Naive thymus-derived CD4-positive, alpha-beta T cell (primary cell): ENCODE measurements at regions of chr5 and their contacts with region 1.

Region 1: DNA sequence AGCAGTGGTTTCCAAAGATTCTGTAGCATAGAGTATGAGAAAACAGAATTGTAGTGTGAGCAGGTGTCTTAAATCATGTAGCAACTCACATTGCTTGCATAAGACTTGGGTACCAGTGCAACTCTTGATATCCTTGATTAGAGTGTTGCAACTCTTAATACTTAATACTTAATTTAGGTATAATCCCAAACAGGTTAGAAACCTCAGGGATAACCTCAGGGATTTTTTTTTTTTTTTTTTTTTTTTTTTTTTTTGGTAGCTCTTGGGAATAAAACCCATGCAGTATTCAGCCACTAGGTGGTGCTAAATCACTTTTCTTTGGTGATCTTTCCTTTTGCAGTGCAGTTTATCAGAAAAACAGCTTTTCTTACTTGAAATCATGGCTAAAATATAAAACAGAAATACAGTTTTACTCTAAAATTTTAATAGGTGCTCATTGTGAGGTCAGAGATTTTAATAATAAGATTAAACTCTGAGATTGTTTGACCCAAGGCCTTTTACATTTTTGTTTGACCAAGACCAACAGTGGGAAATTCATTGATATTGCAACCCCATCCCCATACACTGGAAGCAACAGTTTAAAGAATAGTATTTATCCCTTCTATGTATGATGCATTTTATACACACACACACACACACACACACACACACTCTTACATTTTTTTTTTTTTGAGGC is 55.3 kb downstream of the ERAP1 start:
- DNase-seq: peak in 7 of 9 donors; percentile 46 to 72 (median 60)
- ATAC-seq: peak; percentile 70
- H3K4me3 ChIP-seq: no peak overlapping the region
- H3K4me3 Mint-ChIP-seq: no peak overlapping the region
- H3K27ac ChIP-seq: no peak overlapping the region
- H3K27ac Mint-ChIP-seq: peak overlapping the region in 6 of 9 donors; percentile 36 to 67 (median 56)
- H3K4me1 ChIP-seq: no peaks in the 10 kb centered on the region
- H3K4me1 Mint-ChIP-seq: peaks cover 0 to 8% (median 0%) of the 10 kb centered on the region in 7 donors
- H3K27me3 ChIP-seq: no peaks in the 10 kb centered on the region
- H3K27me3 Mint-ChIP-seq: no peaks in the 10 kb centered on the region

Region 2: GRCh38 chr5:96247097-96247701 is 505.3 kb before region 1 on chr5:
- CTCF ChIA-PET with region 1: no interaction called
- POLR2A ChIA-PET with region 1: no interaction called
- intact Hi-C with region 1: no loop called
- DNase-seq: no peak
- ATAC-seq: no peak
- H3K4me3 ChIP-seq: no peak overlapping the region
- H3K4me3 Mint-ChIP-seq: no peak overlapping the region
- H3K27ac ChIP-seq: no peak overlapping the region
- H3K27ac Mint-ChIP-seq: no peak overlapping the region
- H3K4me1 ChIP-seq: no peaks in the 10 kb centered on the region
- H3K4me1 Mint-ChIP-seq: no peaks in the 10 kb centered on the region
- H3K27me3 ChIP-seq: no peaks in the 10 kb centered on the region
- H3K27me3 Mint-ChIP-seq: peaks cover 11 to 46% (median 39%) of the 10 kb centered on the region in 5 donors

Region 3: DNA sequence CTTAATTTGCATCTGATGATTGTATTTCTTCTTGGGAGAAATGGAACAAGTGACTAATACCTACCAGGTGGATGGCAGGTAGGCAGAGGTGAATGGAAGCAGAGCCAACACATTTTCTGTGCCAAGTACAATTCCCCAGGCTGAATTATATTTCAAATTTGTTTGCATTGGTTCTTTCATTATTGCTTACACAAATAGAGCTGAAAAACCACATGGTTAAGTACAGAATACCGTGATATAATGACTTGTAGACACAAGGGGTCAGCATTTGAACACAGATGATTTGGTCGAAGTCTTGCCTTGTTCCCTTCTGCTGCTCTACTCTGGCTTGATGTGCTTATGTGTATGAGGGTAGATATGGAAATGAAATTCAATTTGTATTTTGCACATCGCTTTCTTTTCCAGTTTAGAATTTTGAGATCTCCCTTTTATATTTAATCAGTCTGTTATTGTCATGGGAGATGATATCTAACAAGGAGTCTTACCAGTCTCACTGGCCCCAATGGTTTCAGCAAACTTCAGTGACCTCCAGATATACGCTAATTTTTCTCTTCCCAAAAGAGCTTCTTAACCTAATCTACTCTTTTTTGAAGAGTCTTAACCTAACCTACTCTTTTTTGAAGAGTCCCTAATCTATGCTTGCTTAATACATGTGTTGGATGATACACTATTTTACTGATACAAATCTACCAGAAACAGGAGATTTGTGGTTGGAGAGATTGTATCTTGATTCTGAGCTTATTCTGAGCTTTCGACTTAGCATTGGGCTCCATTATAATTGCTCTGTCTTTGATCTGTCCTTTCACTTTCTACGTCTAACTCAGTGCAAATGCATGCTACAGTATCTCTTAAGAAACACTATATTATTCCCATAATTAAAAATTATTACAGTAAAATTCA is 407.6 kb before region 1 on chr5:
- CTCF ChIA-PET with region 1: no interaction called
- POLR2A ChIA-PET with region 1: no interaction called
- intact Hi-C with region 1: loop called in 1 of 2 experiments (anchors 10 kb)
- DNase-seq: peak in 7 of 9 donors; percentile 33 to 70 (median 59)
- ATAC-seq: peak; percentile 91
- H3K4me3 ChIP-seq: no peak overlapping the region
- H3K4me3 Mint-ChIP-seq: peak overlapping the region; percentile 1 to 72 (median 48)
- H3K27ac ChIP-seq: no peak overlapping the region
- H3K27ac Mint-ChIP-seq: peak overlapping the region in 6 of 9 donors; percentile 3 to 53 (median 10)
- H3K4me1 ChIP-seq: peaks cover 6 to 7% of the 10 kb centered on the region in 2 donors
- H3K4me1 Mint-ChIP-seq: peaks cover 5 to 21% (median 18%) of the 10 kb centered on the region in 7 donors
- H3K27me3 ChIP-seq: no peaks in the 10 kb centered on the region
- H3K27me3 Mint-ChIP-seq: peaks cover 0 to 38% (median 8%) of the 10 kb centered on the region in 5 donors

Region 4: DNA sequence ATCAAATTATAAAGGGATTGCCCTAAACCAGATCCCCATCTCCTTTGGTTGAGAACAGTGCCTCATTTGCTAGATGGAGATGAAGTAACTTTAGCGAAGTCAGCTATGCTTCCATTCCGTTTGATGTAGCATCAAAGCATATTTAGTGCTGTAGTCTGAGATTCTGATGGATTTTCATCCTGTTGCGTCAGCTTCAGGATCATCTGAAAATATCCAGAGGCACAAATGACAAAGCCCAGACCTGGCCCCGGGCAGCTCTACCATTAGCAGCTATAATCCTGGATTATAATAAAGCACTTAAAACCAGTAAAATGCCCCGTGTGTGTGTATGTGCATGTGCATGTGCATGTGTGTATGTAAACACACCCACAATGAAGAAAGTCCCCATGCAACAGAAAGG is 10.5 kb after region 1 on chr5:
- CTCF ChIA-PET with region 1: interaction called, 11 read pairs
- POLR2A ChIA-PET with region 1: no interaction called
- intact Hi-C with region 1: no loop called
- DNase-seq: no peak
- ATAC-seq: no peak
- H3K4me3 ChIP-seq: no peak overlapping the region
- H3K4me3 Mint-ChIP-seq: no peak overlapping the region
- H3K27ac ChIP-seq: no peak overlapping the region
- H3K27ac Mint-ChIP-seq: peak overlapping the region in 4 of 9 donors; percentile 17 to 32 (median 26)
- H3K4me1 ChIP-seq: no peaks in the 10 kb centered on the region
- H3K4me1 Mint-ChIP-seq: peaks cover 0 to 18% (median 9%) of the 10 kb centered on the region in 7 donors
- H3K27me3 ChIP-seq: no peaks in the 10 kb centered on the region
- H3K27me3 Mint-ChIP-seq: no peaks in the 10 kb centered on the region

Region 5: DNA sequence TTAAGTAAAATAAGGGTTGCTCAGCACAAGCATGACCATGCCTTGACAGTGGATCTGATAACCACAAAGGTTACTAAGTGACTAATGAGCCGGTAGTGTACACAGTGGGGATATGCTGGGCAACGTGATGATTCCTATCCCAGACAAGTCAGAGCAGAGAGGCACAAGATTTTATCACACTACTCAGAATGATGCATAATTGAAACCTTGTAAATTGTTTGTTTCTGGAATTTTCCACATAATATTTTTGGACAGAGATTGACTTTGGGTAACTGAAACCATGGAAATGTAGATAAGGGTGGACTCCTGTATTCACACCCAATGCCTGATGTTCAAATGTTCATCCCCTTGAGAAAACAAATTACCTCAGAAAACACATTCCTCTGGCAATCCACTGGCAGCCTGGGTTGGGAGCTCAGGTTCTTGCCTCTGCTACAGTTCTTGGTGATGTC is 71.4 kb after region 1 on chr5:
- CTCF ChIA-PET with region 1: interaction called, 23 read pairs
- POLR2A ChIA-PET with region 1: interaction called, 3 read pairs
- intact Hi-C with region 1: loop called (anchors 1 to 2 kb)
- DNase-seq: no peak
- ATAC-seq: peak; percentile 48
- H3K4me3 ChIP-seq: no peak overlapping the region
- H3K4me3 Mint-ChIP-seq: no peak overlapping the region
- H3K27ac ChIP-seq: no peak overlapping the region
- H3K27ac Mint-ChIP-seq: peak overlapping the region in 1 of 9 donors; percentile 35
- H3K4me1 ChIP-seq: peaks cover 0 to 29% of the 10 kb centered on the region in 2 donors
- H3K4me1 Mint-ChIP-seq: peaks cover 15 to 49% (median 46%) of the 10 kb centered on the region in 7 donors
- H3K27me3 ChIP-seq: no peaks in the 10 kb centered on the region
- H3K27me3 Mint-ChIP-seq: peaks cover 0 to 21% (median 0%) of the 10 kb centered on the region in 5 donors

Region 6: GRCh38 chr5:97046270-97046982 is 293.9 kb after region 1 on chr5:
- CTCF ChIA-PET with region 1: no interaction called
- POLR2A ChIA-PET with region 1: no interaction called
- intact Hi-C with region 1: loop called in 1 of 2 experiments (anchors 2 kb)
- DNase-seq: peak in 1 of 9 donors; percentile 9
- ATAC-seq: no peak
- H3K4me3 ChIP-seq: no peak overlapping the region
- H3K4me3 Mint-ChIP-seq: no peak overlapping the region
- H3K27ac ChIP-seq: no peak overlapping the region
- H3K27ac Mint-ChIP-seq: peak overlapping the region in 1 of 9 donors; percentile 35
- H3K4me1 ChIP-seq: no peaks in the 10 kb centered on the region
- H3K4me1 Mint-ChIP-seq: peaks cover 0 to 7% (median 0%) of the 10 kb centered on the region in 7 donors
- H3K27me3 ChIP-seq: no peaks in the 10 kb centered on the region
- H3K27me3 Mint-ChIP-seq: peaks cover 0 to 31% (median 0%) of the 10 kb centered on the region in 5 donors

Region 7: GRCh38 chr5:97534166-97534565 is 781.7 kb after region 1 on chr5:
- CTCF ChIA-PET with region 1: no interaction called
- POLR2A ChIA-PET with region 1: no interaction called
- intact Hi-C with region 1: loop called in 1 of 2 experiments (anchors 5 kb)
- DNase-seq: no peak
- ATAC-seq: peak; percentile 76
- H3K4me3 ChIP-seq: no peak overlapping the region
- H3K4me3 Mint-ChIP-seq: no peak overlapping the region
- H3K27ac ChIP-seq: no peak overlapping the region
- H3K27ac Mint-ChIP-seq: peak overlapping the region in 2 of 9 donors; percentile 5 to 39
- H3K4me1 ChIP-seq: no peaks in the 10 kb centered on the region
- H3K4me1 Mint-ChIP-seq: peaks cover 0 to 17% (median 0%) of the 10 kb centered on the region in 7 donors
- H3K27me3 ChIP-seq: no peaks in the 10 kb centered on the region
- H3K27me3 Mint-ChIP-seq: peaks cover 0 to 4% (median 3%) of the 10 kb centered on the region in 5 donors